ENCODE measurements at regions of chr6 and their contacts with region 1.

Region 1: GRCh38 chr6:12011276-12012076 is 636 bp upstream of the HIVEP1 start:
- DNase-seq: peak; percentile 98

Region 2: DNA sequence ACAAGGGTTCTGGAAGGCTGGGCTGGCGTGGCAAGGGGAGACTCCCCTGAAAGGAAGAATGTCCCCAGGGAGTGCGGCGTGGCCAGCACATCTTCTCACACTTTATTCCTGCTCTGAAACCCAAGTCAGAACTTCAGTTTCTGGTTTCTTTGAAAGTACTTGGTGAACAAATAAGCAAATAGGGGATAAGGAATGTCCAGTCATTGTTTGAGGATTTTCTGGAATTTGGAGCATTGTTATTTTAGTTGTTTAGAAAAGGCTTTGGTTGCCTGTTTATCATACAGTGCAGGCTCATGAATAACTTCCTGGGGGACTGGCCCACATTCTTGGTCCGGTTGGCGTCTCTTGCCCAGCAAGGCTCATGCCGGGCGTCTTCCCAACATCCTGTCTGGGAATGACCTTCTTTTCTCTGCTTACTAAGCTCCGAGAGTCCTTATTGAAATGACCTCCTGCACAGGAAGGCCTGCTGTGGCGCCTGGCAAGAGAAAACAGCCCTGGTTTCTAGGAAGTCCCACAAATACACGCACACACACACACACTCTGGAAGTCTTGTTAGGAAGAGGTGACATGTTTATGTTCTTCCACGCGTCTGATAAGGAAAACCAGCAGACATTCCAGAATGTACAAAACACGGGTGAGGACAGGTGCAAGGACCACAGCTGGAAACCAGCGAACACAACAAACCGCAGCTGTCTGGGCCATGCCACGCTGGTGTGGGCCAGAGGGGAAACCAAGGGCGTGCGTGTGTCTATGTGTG is 402.0 kb before region 1 on chr6:
- intact Hi-C with region 1: loop called (anchors 5 kb)
- DNase-seq: no peak

Region 3: GRCh38 chr6:11654876-11655275 is 356.6 kb before region 1 on chr6:
- intact Hi-C with region 1: loop called (anchors 5 kb)
- DNase-seq: no peak

Region 4: DNA sequence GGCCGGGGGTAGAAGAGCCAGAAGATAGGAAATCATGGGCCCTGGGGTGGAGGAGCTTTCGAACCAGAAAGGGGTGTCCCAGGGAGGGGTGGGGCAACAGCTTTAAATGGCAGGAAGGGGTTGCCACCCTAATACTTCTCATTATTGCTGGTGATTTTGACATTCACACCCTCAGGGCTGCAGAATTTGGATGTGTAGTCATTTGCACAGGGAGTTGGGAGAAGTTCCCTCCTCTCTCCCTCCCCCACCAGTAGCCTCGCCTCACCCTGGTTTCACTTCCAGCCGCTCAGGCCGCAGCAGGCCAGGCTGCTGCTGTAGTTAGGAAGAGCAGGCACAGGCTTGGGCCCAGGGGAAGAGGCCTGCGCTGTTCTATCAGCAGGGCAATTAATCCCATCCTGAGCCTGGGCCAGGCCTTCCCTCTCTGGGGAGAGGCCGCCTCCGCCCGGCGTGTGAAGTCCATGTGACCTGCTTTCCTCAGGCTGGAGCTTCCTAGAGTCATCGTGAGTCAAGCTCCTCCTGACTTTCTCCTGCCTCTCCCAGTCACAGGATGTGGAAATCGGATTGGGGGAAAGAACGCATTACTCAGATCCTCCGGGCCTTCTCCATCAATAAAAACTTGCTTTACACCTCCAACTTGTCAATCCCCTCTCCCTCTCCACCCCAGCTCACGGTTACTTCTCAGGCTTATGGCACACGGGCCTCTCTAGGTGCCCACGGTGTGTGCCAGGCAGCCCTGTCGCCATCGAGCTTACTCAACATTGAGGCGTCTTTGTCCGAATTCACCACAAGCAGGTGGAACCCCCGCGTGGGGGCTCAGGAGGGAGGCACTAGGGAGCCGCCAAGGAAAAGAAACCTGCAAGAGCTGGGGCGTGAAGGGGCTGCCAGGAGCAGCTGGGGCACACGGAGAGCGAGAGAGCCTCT is 240.7 kb before region 1 on chr6:
- intact Hi-C with region 1: loop called (anchors 1 kb)
- DNase-seq: peak; percentile 91

Region 5: GRCh38 chr6:11810039-11810541 is 201.4 kb before region 1 on chr6:
- intact Hi-C with region 1: loop called (anchors 2 kb)
- DNase-seq: peak; percentile 87

Region 6: DNA sequence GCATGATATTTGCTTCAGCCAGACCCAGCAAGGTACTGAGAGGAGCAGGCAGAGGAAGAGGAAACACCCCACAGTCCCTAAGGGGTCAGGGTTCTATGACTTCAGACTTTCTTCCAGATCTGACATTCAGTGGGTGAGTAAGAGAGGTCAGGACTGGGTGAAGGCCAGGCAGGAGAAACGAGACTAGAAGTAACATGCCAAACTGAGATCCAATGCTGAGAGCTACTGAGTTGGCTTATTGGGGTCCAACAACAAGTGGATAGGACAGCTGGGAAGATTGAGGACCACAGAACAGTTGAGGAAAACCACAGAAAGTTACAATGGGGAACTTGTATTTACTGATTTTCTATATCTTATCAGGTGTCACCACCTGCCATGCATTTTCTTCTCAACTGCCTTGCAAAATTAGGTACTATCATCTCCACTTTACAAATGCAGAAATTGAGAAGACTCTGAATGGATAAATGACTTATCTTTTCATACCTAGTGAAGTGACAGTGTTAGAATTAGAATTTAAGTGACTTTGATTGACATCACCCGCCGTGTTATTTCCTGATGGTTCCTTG is 43.2 kb before region 1 on chr6:
- intact Hi-C with region 1: loop called (anchors 5 kb)
- DNase-seq: no peak

Measured in cardiac septum (tissue), 1 donor.